Activated naive CD4-positive, alpha-beta T cell treated with anti-CD3 and anti-CD28 coated beads for 36 hours (primary cell): ENCODE measurements at regions of chr2 and their contacts with region 1.

Region 1: DNA sequence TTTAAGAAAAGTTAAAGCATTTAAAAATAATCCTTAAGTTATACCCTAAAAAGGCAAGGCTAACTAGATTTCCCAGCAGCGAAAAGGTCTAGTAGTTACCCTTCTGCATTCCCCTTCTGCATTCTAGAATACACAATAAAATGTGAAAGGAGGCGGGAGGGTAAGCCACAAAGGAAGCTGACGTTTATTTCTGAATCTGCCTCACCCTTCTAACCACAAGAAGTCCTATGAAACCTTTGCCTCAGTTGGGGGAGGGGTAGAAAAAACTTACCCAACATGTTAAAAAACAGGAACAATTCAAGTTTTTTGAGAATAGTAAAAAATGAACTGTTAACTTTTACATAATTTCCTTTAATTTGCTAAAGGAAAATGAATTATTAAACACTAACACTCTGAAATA is 11.3 kb downstream of the STK17B start:
- DNase-seq: peak; percentile 77
- H3K4me3 Mint-ChIP-seq: peak overlapping the region; percentile 36
- H3K27ac Mint-ChIP-seq: peak overlapping the region; percentile 96
- H3K4me1 Mint-ChIP-seq: peaks cover 67% of the 10 kb centered on the region
- H3K27me3 Mint-ChIP-seq: no peaks in the 10 kb centered on the region

Region 2: GRCh38 chr2:195552581-195552980 is 607.5 kb before region 1 on chr2:
- CTCF ChIA-PET with region 1: no interaction called
- intact Hi-C with region 1: no loop called
- DNase-seq: no peak
- H3K4me3 Mint-ChIP-seq: peak overlapping the region; percentile 53
- H3K27ac Mint-ChIP-seq: peak overlapping the region; percentile 82
- H3K4me1 Mint-ChIP-seq: peaks cover 58% of the 10 kb centered on the region
- H3K27me3 Mint-ChIP-seq: no peaks in the 10 kb centered on the region

Region 3: DNA sequence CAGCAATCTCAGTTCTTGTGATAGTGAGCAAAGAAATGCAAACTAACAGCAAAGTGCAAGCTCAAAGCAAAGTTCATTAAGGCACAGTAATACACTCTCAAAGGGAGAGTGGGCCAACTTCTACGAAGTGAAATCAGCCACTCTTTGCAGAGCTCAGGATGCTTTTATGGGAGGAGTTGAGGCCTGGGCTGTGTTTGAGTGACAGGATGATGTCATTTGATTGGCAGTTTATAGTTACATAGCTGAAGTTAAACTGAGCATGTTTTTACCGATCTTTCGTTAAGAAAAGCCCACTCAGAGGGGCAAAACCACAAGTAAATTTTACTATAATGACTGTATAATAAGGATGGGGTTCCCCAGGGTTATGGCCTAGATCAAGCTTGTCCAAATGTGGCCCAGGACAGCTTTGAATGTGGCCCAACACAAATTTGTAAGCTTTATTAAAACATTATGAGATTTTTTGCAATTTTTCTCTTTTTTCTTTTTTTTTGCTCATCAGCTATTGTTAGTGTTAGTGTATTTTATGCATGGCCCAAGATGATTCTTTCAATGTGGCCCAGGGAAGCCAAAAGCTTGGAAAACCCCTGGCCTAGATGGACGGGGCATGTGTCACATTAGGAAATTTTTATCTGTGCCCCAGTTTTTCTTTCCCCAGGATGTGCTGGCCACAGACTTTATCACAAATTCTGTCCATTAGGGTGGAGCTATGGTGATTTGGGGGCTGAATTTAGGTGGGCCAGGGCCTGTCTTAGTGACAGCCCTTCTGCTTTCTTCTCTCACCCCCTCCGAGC is 83.1 kb before region 1 on chr2:
- CTCF ChIA-PET with region 1: interaction called, 9 read pairs
- intact Hi-C with region 1: loop called (anchors 2 kb)
- DNase-seq: no peak
- H3K4me3 Mint-ChIP-seq: no peak overlapping the region
- H3K27ac Mint-ChIP-seq: no peak overlapping the region
- H3K4me1 Mint-ChIP-seq: peaks cover 25% of the 10 kb centered on the region
- H3K27me3 Mint-ChIP-seq: no peaks in the 10 kb centered on the region

Region 4: DNA sequence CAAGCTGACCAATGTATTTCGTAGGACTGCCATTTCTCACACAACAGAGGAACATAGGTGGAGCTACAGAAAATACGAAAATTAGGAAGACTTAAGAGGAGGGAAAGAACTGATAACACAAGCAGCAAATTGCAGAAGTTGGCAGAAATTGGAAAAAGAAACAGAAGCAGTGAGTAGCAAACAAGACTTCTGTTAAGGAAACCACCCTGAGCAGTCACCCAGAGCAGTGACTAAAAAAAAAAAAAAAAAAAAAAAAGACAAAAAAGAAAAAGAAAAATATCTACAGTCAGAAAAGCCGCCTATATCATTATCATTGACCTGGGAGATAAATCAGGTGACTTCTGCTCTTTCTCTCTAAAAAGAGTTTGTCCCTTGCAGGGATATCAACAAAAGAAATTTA is 10.2 kb before region 1 on chr2:
- CTCF ChIA-PET with region 1: interaction called, 9 read pairs
- intact Hi-C with region 1: loop called (anchors 1 kb)
- DNase-seq: no peak
- H3K4me3 Mint-ChIP-seq: peak overlapping the region; percentile 36
- H3K27ac Mint-ChIP-seq: peak overlapping the region; percentile 91
- H3K4me1 Mint-ChIP-seq: peaks cover 89% of the 10 kb centered on the region
- H3K27me3 Mint-ChIP-seq: no peaks in the 10 kb centered on the region

Region 5: GRCh38 chr2:196200557-196200956 is 40.5 kb after region 1 on chr2:
- CTCF ChIA-PET with region 1: no interaction called
- intact Hi-C with region 1: loop called (anchors 1 kb)
- DNase-seq: peak; percentile 72
- H3K4me3 Mint-ChIP-seq: no peak overlapping the region
- H3K27ac Mint-ChIP-seq: peak overlapping the region; percentile 56
- H3K4me1 Mint-ChIP-seq: peaks cover 52% of the 10 kb centered on the region
- H3K27me3 Mint-ChIP-seq: no peaks in the 10 kb centered on the region

Region 6: GRCh38 chr2:196263181-196263747 is 103.2 kb after region 1 on chr2:
- CTCF ChIA-PET with region 1: interaction called, 5 read pairs
- intact Hi-C with region 1: loop called (anchors 2 kb)
- DNase-seq: peak; percentile 61
- H3K4me3 Mint-ChIP-seq: peak overlapping the region; percentile 70
- H3K27ac Mint-ChIP-seq: peak overlapping the region; percentile 97
- H3K4me1 Mint-ChIP-seq: peaks cover 80% of the 10 kb centered on the region
- H3K27me3 Mint-ChIP-seq: no peaks in the 10 kb centered on the region

Region 7: GRCh38 chr2:196289000-196289399 is 128.9 kb after region 1 on chr2:
- CTCF ChIA-PET with region 1: no interaction called
- intact Hi-C with region 1: no loop called
- DNase-seq: no peak
- H3K4me3 Mint-ChIP-seq: no peak overlapping the region
- H3K27ac Mint-ChIP-seq: no peak overlapping the region
- H3K4me1 Mint-ChIP-seq: peaks cover 62% of the 10 kb centered on the region
- H3K27me3 Mint-ChIP-seq: no peaks in the 10 kb centered on the region

Region 8: DNA sequence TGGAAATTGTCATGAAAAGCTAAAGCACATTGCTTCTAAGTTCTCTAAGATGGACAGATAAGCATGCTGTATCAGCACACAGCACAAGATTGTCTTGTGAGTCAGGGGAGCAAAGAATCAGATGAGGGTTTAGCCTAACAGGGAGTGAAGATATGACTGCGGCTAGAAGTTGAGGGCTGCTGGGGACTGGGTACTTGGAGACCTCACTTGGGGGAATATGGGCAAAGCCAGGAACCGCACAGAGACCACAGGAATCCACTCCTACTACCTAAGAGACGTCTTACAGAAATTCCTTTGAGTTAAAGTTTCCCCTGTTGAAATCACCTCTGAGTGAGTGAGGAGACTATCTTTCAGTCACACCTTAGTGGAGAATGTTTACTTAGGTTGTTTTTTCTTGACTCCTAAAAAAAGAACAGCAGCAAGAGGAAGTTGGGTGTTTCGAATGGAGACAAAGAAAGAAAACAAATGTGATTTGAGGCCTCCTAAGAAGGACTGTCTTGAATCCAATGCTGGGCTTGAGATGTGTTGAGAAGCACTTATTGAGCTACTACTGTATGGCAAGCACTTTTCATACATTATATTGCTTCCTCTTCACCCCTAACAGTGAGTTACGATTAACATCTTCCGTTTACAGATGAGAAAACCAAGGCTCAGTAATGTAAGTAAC is 1049.8 kb after region 1 on chr2:
- CTCF ChIA-PET with region 1: no interaction called
- intact Hi-C with region 1: loop called (anchors 5 kb)
- DNase-seq: peak; percentile 78
- H3K4me3 Mint-ChIP-seq: peak overlapping the region; percentile 46
- H3K27ac Mint-ChIP-seq: peak overlapping the region; percentile 97
- H3K4me1 Mint-ChIP-seq: peaks cover 99% of the 10 kb centered on the region
- H3K27me3 Mint-ChIP-seq: no peaks in the 10 kb centered on the region